Activated T-helper 1 cell treated with anti-CD3 and anti-CD28 coated beads, Interleukin-12 subunit alpha, Interleukin-12 subunit beta, Interleukin-2, Interleukin-4 antibody, amounts not matched to agents 30 ng/mL and 10 ng/mL and 1 ng/mL, durations not matched to agents 14 hours and 24 hours and 36 hours (primary cell): ENCODE measurements at regions of chr1 and their contacts with region 1.

Region 1: GRCh38 chr1:100377590-100378361 is 25.5 kb downstream of the CDC14A start:
- DNase-seq: no peak
- H3K4me3 Mint-ChIP-seq: peak overlapping the region; percentile 38
- H3K27ac Mint-ChIP-seq: peak overlapping the region; percentile 75
- H3K4me1 Mint-ChIP-seq: peaks cover 55% of the 10 kb centered on the region
- H3K27me3 Mint-ChIP-seq: peaks cover 2% of the 10 kb centered on the region

Region 2: GRCh38 chr1:99786751-99787501 is 590.9 kb before region 1 on chr1:
- intact Hi-C with region 1: loop called (anchors 10 kb)
- DNase-seq: no peak
- H3K4me3 Mint-ChIP-seq: no peak overlapping the region
- H3K27ac Mint-ChIP-seq: no peak overlapping the region
- H3K4me1 Mint-ChIP-seq: peaks cover 26% of the 10 kb centered on the region
- H3K27me3 Mint-ChIP-seq: peaks cover 45% of the 10 kb centered on the region